GM10248 (cell line): ENCODE measurements at regions of chr2 and their contacts with region 1.

Region 1: GRCh38 chr2:169141713-169142352 is 72.5 kb downstream of the DHRS9 start:
- DNase-seq: peak; percentile 52
- CTCF ChIP-seq: peak; percentile 87

Region 2: GRCh38 chr2:168935810-168936581 is 205.8 kb before region 1 on chr2:
- CTCF ChIA-PET with region 1: no interaction called
- POLR2A ChIA-PET with region 1: no interaction called
- DNase-seq: no peak
- CTCF ChIP-seq: no peak

Region 3: GRCh38 chr2:169119126-169119770 is 22.6 kb before region 1 on chr2:
- CTCF ChIA-PET with region 1: interaction called, 14 read pairs
- POLR2A ChIA-PET with region 1: no interaction called
- DNase-seq: no peak
- CTCF ChIP-seq: no peak

Region 4: DNA sequence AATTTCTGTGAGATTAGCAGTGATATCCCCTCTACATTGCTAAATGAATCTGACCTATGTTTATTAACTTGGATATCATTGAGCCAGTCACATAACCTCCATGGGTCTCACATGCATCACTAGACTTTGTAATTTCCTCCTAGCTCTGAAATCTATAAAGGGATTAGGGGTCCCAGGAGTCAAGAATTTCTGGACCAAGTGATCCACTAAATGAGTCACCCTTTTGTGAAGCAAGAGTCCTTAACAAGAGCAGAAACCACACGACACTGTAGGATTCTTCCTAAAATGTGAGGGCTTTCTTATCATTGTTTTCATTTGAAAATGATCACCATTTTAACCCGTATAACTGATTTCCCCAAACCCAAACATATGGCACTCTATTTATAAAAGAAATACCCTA is 17.9 kb after region 1 on chr2:
- CTCF ChIA-PET with region 1: interaction called, 14 read pairs
- POLR2A ChIA-PET with region 1: no interaction called
- DNase-seq: no peak
- CTCF ChIP-seq: no peak

Region 5: DNA sequence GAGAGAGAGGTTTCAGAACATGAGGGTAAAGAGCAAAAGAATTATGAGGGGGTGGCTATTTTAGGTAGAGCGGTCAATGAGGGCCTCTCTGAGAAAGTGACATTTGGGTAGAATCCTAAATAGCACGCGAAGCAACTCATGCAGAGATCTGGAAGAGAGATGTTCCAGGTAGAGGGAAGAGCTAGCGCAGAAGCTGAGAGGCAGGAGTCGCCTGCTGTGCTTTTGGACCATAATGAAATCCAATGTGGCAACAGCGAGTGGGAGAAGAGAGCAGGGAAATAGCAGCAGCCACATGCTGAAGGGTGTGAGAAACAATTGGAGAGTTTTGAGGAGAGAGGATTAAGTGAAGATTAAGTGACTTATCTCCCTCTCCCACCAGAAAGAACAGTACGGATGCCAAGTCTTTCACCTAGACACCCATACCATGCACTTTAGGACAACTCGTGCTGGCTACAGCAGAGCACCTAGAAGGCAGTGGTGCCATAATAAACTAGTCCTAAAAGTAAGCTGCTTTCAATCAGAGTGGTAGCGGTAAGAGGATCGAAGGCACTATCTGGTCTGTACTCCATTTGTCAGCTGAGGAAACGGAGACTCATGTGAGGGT is 90.8 kb after region 1 on chr2:
- CTCF ChIA-PET with region 1: no interaction called
- POLR2A ChIA-PET with region 1: no interaction called
- DNase-seq: no peak
- CTCF ChIP-seq: no peak